Naive thymus-derived CD4-positive, alpha-beta T cell (primary cell): ENCODE measurements at regions of chr5 and their contacts with region 1.

Region 1: GRCh38 chr5:143101121-143101520 is 302.4 kb downstream of the NR3C1 start:
- DNase-seq: no peak
- ATAC-seq: no peak
- H3K4me3 ChIP-seq: no peak overlapping the region
- H3K4me3 Mint-ChIP-seq: peak overlapping the region in 1 of 10 donors; percentile 77
- H3K27ac ChIP-seq: no peak overlapping the region
- H3K27ac Mint-ChIP-seq: peak overlapping the region in 3 of 9 donors; percentile 3 to 91 (median 65)
- H3K4me1 ChIP-seq: peaks cover 0 to 6% of the 10 kb centered on the region in 2 donors
- H3K4me1 Mint-ChIP-seq: peaks cover 0 to 34% (median 9%) of the 10 kb centered on the region in 7 donors
- H3K27me3 ChIP-seq: no peaks in the 10 kb centered on the region
- H3K27me3 Mint-ChIP-seq: no peaks in the 10 kb centered on the region

Region 2: GRCh38 chr5:143008809-143009521 is 92.2 kb before region 1 on chr5:
- CTCF ChIA-PET with region 1: no interaction called
- POLR2A ChIA-PET with region 1: no interaction called
- intact Hi-C with region 1: loop called in 1 of 2 experiments (anchors 1 kb)
- DNase-seq: peak in 8 of 9 donors; percentile 10 to 73 (median 36)
- ATAC-seq: peak; percentile 91
- H3K4me3 ChIP-seq: no peak overlapping the region
- H3K4me3 Mint-ChIP-seq: peak overlapping the region in 4 of 10 donors; percentile 4 to 44 (median 27)
- H3K27ac ChIP-seq: no peak overlapping the region
- H3K27ac Mint-ChIP-seq: peak overlapping the region in 7 of 9 donors; percentile 45 to 86 (median 71)
- H3K4me1 ChIP-seq: peaks cover 12 to 43% of the 10 kb centered on the region in 2 donors
- H3K4me1 Mint-ChIP-seq: peaks cover 27 to 74% (median 32%) of the 10 kb centered on the region in 7 donors
- H3K27me3 ChIP-seq: no peaks in the 10 kb centered on the region
- H3K27me3 Mint-ChIP-seq: no peaks in the 10 kb centered on the region

Region 3: DNA sequence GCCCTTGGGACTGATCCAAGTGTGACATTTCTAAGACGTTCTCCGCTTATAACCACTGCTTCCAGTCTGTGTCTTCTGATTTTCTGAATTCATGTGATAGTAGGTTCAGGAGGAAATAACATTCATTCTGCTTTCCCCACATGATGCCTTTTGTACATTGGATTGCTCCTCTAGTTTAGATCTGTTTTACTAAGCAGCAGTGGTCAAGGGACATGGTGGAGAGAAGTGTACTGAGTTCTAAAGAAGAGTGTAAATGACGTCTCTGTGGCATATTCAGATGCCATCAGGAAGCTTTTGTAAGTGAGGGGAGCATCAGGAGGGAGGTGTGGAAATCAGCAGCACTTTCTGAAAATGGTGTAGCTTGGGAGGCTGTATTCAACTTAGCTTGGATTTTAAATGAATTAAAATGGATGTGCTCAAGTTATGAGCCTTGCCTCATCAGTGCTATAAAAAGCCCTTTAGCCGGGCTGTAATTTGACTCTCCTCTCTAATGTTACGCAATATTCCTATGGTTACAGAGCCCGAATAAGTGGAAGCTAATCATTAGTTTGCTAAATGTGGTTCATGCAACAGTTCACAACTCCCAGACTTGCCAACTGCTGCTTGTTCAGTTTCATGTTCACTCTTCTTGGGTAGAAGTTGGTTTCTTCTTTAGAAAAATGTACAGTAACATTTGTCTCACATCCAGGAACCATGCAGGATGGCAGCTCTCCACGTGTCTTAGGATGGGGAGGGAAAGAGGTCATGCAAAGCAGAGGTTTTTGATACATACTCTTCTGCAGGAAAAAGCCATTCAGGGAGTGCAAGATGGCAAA is 49.7 kb before region 1 on chr5:
- CTCF ChIA-PET with region 1: no interaction called
- POLR2A ChIA-PET with region 1: no interaction called
- intact Hi-C with region 1: loop called in 1 of 2 experiments (anchors 5 kb)
- DNase-seq: no peak
- ATAC-seq: peak; percentile 45
- H3K4me3 ChIP-seq: no peak overlapping the region
- H3K4me3 Mint-ChIP-seq: no peak overlapping the region
- H3K27ac ChIP-seq: no peak overlapping the region
- H3K27ac Mint-ChIP-seq: peak overlapping the region in 2 of 9 donors; percentile 2 to 53
- H3K4me1 ChIP-seq: no peaks in the 10 kb centered on the region
- H3K4me1 Mint-ChIP-seq: peaks cover 5 to 61% (median 18%) of the 10 kb centered on the region in 7 donors
- H3K27me3 ChIP-seq: no peaks in the 10 kb centered on the region
- H3K27me3 Mint-ChIP-seq: no peaks in the 10 kb centered on the region

Region 4: GRCh38 chr5:143066556-143067281 is 34.4 kb before region 1 on chr5:
- CTCF ChIA-PET with region 1: no interaction called
- POLR2A ChIA-PET with region 1: no interaction called
- intact Hi-C with region 1: loop called in 1 of 2 experiments (anchors 2 kb)
- DNase-seq: no peak
- ATAC-seq: peak; percentile 18
- H3K4me3 ChIP-seq: no peak overlapping the region
- H3K4me3 Mint-ChIP-seq: peak overlapping the region in 1 of 10 donors; percentile 7
- H3K27ac ChIP-seq: no peak overlapping the region
- H3K27ac Mint-ChIP-seq: peak overlapping the region in 1 of 9 donors; percentile 65
- H3K4me1 ChIP-seq: no peaks in the 10 kb centered on the region
- H3K4me1 Mint-ChIP-seq: peaks cover 0 to 24% (median 6%) of the 10 kb centered on the region in 7 donors
- H3K27me3 ChIP-seq: no peaks in the 10 kb centered on the region
- H3K27me3 Mint-ChIP-seq: no peaks in the 10 kb centered on the region

Region 5: GRCh38 chr5:143182901-143183820 is 82.0 kb after region 1 on chr5:
- CTCF ChIA-PET with region 1: no interaction called
- POLR2A ChIA-PET with region 1: no interaction called
- intact Hi-C with region 1: loop called in 1 of 2 experiments (anchors 5 kb)
- DNase-seq: peak in 1 of 9 donors; percentile 80
- ATAC-seq: peak; percentile 61
- H3K4me3 ChIP-seq: no peak overlapping the region
- H3K4me3 Mint-ChIP-seq: peak overlapping the region in 1 of 10 donors; percentile 66
- H3K27ac ChIP-seq: no peak overlapping the region
- H3K27ac Mint-ChIP-seq: peak overlapping the region in 1 of 9 donors; percentile 89
- H3K4me1 ChIP-seq: peaks cover 3 to 22% of the 10 kb centered on the region in 2 donors
- H3K4me1 Mint-ChIP-seq: peaks cover 6 to 65% (median 16%) of the 10 kb centered on the region in 7 donors
- H3K27me3 ChIP-seq: no peaks in the 10 kb centered on the region
- H3K27me3 Mint-ChIP-seq: no peaks in the 10 kb centered on the region

Region 6: GRCh38 chr5:143222287-143223231 is 121.4 kb after region 1 on chr5:
- CTCF ChIA-PET with region 1: no interaction called
- POLR2A ChIA-PET with region 1: no interaction called
- intact Hi-C with region 1: loop called in 1 of 2 experiments (anchors 2 kb)
- DNase-seq: peak; percentile 13 to 55 (median 27)
- ATAC-seq: peak; percentile 81
- H3K4me3 ChIP-seq: peak overlapping the region; percentile 7
- H3K4me3 Mint-ChIP-seq: peak overlapping the region; percentile 9 to 80 (median 54)
- H3K27ac ChIP-seq: peak overlapping the region; percentile 40
- H3K27ac Mint-ChIP-seq: peak overlapping the region; percentile 60 to 94 (median 88)
- H3K4me1 ChIP-seq: peaks cover 0 to 30% of the 10 kb centered on the region in 2 donors
- H3K4me1 Mint-ChIP-seq: peaks cover 33 to 76% (median 40%) of the 10 kb centered on the region in 7 donors
- H3K27me3 ChIP-seq: no peaks in the 10 kb centered on the region
- H3K27me3 Mint-ChIP-seq: no peaks in the 10 kb centered on the region